Posterior vena cava (tissue), 2 donors: ENCODE measurements at regions of chr11 and their contacts with region 1.

Region 1: GRCh38 chr11:111441443-111441842 is 62.4 kb upstream of the POU2AF1 start:
- DNase-seq: no peak

Region 2: GRCh38 chr11:111283945-111284481 is 157.4 kb before region 1 on chr11:
- intact Hi-C with region 1: loop called in 1 of 2 experiments (anchors 5 kb)
- DNase-seq: no peak

Region 3: DNA sequence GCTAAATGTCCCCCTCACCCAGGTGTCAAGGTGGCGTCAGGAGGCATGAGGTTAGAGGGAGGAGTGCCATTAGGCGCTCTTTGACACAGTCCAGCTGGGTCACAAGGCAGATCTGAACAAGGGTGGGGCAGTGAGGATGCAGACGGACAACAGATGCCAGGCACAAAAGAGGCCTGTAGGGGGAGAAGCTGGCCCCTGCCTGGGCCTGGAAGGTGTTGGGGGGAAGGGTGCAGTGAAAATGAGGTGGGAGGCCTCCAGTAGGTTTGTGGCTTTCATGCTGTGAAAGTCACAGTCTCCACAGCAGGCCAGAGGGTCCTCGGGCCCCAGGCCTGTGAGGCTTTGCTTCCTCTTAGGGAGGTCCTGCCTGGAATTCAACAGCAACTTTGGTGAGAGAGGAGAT is 904.3 kb after region 1 on chr11:
- intact Hi-C with region 1: loop called in 1 of 2 experiments (anchors 5 kb)
- DNase-seq: no peak